MCF 10A (cell line): ENCODE measurements at regions of chr14 and their contacts with region 1.

Region 1: GRCh38 chr14:85528080-85528896 is 1.7 kb upstream of the FLRT2 start:
- DNase-seq: peak; percentile 88
- H3K4me3 Mint-ChIP-seq: peak overlapping the region; percentile 86
- H3K27ac Mint-ChIP-seq: peak overlapping the region; percentile 73
- H3K4me1 Mint-ChIP-seq: peaks cover 23% of the 10 kb centered on the region
- H3K27me3 Mint-ChIP-seq: no peaks in the 10 kb centered on the region
- CTCF ChIP-seq: peak; percentile 73

Region 2: GRCh38 chr14:83988274-83988673 is 1540.0 kb before region 1 on chr14:
- CTCF ChIA-PET with region 1: interaction called, 3 read pairs
- POLR2A ChIA-PET with region 1: no interaction called
- intact Hi-C with region 1: loop called (anchors 1 kb)
- DNase-seq: peak; percentile 45
- H3K4me3 Mint-ChIP-seq: no peak overlapping the region
- H3K27ac Mint-ChIP-seq: no peak overlapping the region
- H3K4me1 Mint-ChIP-seq: peaks cover 17% of the 10 kb centered on the region
- H3K27me3 Mint-ChIP-seq: no peaks in the 10 kb centered on the region
- CTCF ChIP-seq: peak; percentile 23

Region 3: DNA sequence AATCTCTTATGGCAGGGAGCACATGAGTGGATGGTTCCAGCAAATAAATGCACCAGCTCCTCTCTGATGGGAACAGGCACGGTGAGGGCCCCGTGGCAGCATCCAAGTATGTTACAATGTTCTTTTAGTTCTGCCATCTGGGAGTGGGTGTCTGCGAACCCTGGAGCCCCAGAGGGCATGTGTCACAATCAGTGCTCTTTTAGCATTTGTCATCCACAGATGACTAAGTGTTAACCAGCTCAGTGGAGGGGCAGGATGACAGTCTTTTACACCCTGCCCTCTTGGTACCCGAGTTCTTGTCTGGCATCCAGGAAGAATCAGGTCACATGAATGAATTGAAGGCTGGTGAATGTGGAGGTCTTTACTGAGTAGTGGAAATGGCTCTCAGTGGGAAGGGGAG is 558.8 kb before region 1 on chr14:
- CTCF ChIA-PET with region 1: no interaction called
- POLR2A ChIA-PET with region 1: no interaction called
- intact Hi-C with region 1: loop called (anchors 5 kb)
- DNase-seq: peak; percentile 76
- H3K4me3 Mint-ChIP-seq: no peak overlapping the region
- H3K27ac Mint-ChIP-seq: no peak overlapping the region
- H3K4me1 Mint-ChIP-seq: peaks cover 12% of the 10 kb centered on the region
- H3K27me3 Mint-ChIP-seq: no peaks in the 10 kb centered on the region
- CTCF ChIP-seq: no peak

Region 4: GRCh38 chr14:85195872-85196477 is 332.3 kb before region 1 on chr14:
- CTCF ChIA-PET with region 1: interaction called, 5 read pairs
- POLR2A ChIA-PET with region 1: no interaction called
- intact Hi-C with region 1: loop called (anchors 1 kb)
- DNase-seq: peak; percentile 38
- H3K4me3 Mint-ChIP-seq: no peak overlapping the region
- H3K27ac Mint-ChIP-seq: no peak overlapping the region
- H3K4me1 Mint-ChIP-seq: no peaks in the 10 kb centered on the region
- H3K27me3 Mint-ChIP-seq: no peaks in the 10 kb centered on the region
- CTCF ChIP-seq: peak; percentile 42

Region 5: GRCh38 chr14:85409496-85410210 is 118.6 kb before region 1 on chr14:
- CTCF ChIA-PET with region 1: interaction called, 13 read pairs
- POLR2A ChIA-PET with region 1: interaction called, 7 read pairs
- intact Hi-C with region 1: no loop called
- DNase-seq: no peak
- H3K4me3 Mint-ChIP-seq: no peak overlapping the region
- H3K27ac Mint-ChIP-seq: peak overlapping the region; percentile 1
- H3K4me1 Mint-ChIP-seq: peaks cover 26% of the 10 kb centered on the region
- H3K27me3 Mint-ChIP-seq: no peaks in the 10 kb centered on the region
- CTCF ChIP-seq: no peak

Region 6: GRCh38 chr14:85516239-85517112 is 11.8 kb before region 1 on chr14:
- CTCF ChIA-PET with region 1: interaction called, 10 read pairs
- POLR2A ChIA-PET with region 1: interaction called, 17 read pairs
- intact Hi-C with region 1: no loop called
- DNase-seq: peak; percentile 80
- H3K4me3 Mint-ChIP-seq: peak overlapping the region; percentile 53
- H3K27ac Mint-ChIP-seq: peak overlapping the region; percentile 74
- H3K4me1 Mint-ChIP-seq: peaks cover 26% of the 10 kb centered on the region
- H3K27me3 Mint-ChIP-seq: no peaks in the 10 kb centered on the region
- CTCF ChIP-seq: no peak

Region 7: GRCh38 chr14:86038387-86039042 is 510.2 kb after region 1 on chr14:
- CTCF ChIA-PET with region 1: interaction called, 3 read pairs
- POLR2A ChIA-PET with region 1: interaction called, 4 read pairs
- intact Hi-C with region 1: loop called (anchors 5 kb)
- DNase-seq: peak; percentile 59
- H3K4me3 Mint-ChIP-seq: no peak overlapping the region
- H3K27ac Mint-ChIP-seq: no peak overlapping the region
- H3K4me1 Mint-ChIP-seq: no peaks in the 10 kb centered on the region
- H3K27me3 Mint-ChIP-seq: no peaks in the 10 kb centered on the region
- CTCF ChIP-seq: peak; percentile 63